Heart right ventricle (tissue), 16 donors: ENCODE measurements at regions of chr3 and their contacts with region 1.

Region 1: DNA sequence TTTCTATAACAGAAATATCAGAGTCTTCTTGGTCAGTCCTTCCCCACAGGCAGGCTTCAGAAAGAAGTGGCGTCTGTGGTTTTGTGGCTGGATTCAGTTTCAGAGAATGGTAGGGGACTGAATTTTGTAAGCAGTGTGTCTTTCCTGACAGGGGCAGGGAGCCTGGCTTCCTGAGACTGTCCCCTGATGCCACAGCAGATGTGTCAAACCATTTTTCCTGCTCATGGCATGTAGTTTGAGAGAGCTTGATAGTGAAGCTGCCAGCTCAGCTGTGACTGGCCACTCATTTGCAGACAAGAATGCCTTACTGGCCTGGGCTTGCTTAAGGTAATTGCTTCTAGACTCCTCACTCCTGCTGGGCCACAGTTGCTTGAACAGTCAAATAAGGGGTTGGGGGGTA is 26.4 kb downstream of the LARS2 start:
- DNase-seq: no peak
- ATAC-seq: no peak
- H3K4me3 ChIP-seq: no peak overlapping the region
- H3K27ac ChIP-seq: no peak overlapping the region
- H3K4me1 ChIP-seq: peaks cover 4 to 12% (median 8%) of the 10 kb centered on the region in 9 donors
- H3K27me3 ChIP-seq: no peaks in the 10 kb centered on the region
- CTCF ChIP-seq: no peak

Region 2: GRCh38 chr3:43994657-43995077 is 1420.2 kb before region 1 on chr3:
- intact Hi-C with region 1: loop called in 1 of 10 experiments (anchors 5 kb)
- DNase-seq: no peak
- ATAC-seq: peak in 1 of 8 donors; percentile 45
- H3K4me3 ChIP-seq: peak overlapping the region in 8 of 10 donors; percentile 7 to 41 (median 28)
- H3K27ac ChIP-seq: no peak overlapping the region
- H3K4me1 ChIP-seq: peaks cover 9 to 50% (median 44%) of the 10 kb centered on the region in 9 donors
- H3K27me3 ChIP-seq: peaks cover 35 to 100% (median 100%) of the 10 kb centered on the region in 7 donors
- CTCF ChIP-seq: no peak

Region 3: DNA sequence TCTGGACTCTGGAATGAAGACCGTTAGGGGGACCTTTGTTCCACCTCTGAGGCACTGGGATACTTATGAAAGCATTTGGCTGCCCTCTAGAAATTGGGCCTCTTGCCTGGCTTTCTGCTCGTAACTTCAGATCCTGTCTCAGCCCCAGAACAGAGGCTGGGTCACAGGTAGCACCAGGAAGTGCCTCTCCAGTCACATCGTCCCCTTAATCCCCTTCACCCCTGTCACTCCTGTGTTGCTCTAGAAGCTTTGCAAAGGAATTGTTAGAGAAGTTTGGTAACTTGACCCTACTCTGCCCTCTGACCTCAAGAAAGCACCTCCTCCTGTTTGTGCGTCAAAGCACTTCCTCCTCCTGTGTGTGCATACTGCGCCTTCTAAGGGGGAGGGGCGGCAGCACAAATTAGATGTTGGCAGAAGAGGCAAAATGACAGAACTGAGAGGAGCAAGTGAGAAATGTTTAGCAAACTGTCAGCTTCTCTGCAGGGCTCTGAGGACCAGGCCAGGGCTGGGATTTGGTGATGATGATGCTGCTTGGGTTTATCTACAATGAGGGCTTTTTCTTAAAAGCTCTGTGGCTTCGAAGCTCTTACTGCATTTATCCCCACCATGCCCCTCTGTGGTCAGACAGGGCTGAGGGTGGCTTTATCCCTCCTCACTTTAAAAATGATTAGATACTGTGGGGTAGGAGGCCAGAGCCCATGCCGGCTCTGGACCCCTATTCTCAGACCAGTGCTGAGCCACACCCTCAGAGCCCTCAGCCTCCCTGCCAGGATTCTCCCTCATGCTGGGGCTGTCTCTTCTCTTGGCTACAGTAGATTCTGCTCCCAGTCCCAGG is 49.7 kb after region 1 on chr3:
- intact Hi-C with region 1: loop called in 1 of 10 experiments (anchors 1 kb)
- DNase-seq: peak in 1 of 2 donors; percentile 30
- ATAC-seq: peak in 3 of 8 donors; percentile 18 to 68 (median 48)
- H3K4me3 ChIP-seq: no peak overlapping the region
- H3K27ac ChIP-seq: peak overlapping the region in 1 of 10 donors; percentile 71
- H3K4me1 ChIP-seq: peaks cover 0 to 13% (median 0%) of the 10 kb centered on the region in 9 donors
- H3K27me3 ChIP-seq: no peaks in the 10 kb centered on the region
- CTCF ChIP-seq: no peak